MCF 10A (cell line): ENCODE measurements at regions of chr2 and their contacts with region 1.

Region 1: GRCh38 chr2:118088051-118089024 is at the start of gene INSIG2:
- DNase-seq: peak; percentile 97
- H3K4me3 Mint-ChIP-seq: peak within 1 kb of the TSS; percentile 93
- H3K27ac Mint-ChIP-seq: peak within 1 kb of the TSS; percentile 90
- H3K4me1 Mint-ChIP-seq: peaks cover 5% of the 10 kb centered on the region
- H3K27me3 Mint-ChIP-seq: peaks cover 23% of the 10 kb centered on the region
- CTCF ChIP-seq: peak; percentile 17
- total RNA-seq, gene INSIG2: 15.0 and 28.4 TPM in 2 replicates

Region 2: GRCh38 chr2:117571590-117572349 is 516.6 kb before region 1 on chr2:
- CTCF ChIA-PET with region 1: no interaction called
- POLR2A ChIA-PET with region 1: no interaction called
- intact Hi-C with region 1: no loop called
- DNase-seq: no peak
- H3K4me3 Mint-ChIP-seq: no peak overlapping the region
- H3K27ac Mint-ChIP-seq: no peak overlapping the region
- H3K4me1 Mint-ChIP-seq: no peaks in the 10 kb centered on the region
- H3K27me3 Mint-ChIP-seq: no peaks in the 10 kb centered on the region
- CTCF ChIP-seq: no peak

Region 3: DNA sequence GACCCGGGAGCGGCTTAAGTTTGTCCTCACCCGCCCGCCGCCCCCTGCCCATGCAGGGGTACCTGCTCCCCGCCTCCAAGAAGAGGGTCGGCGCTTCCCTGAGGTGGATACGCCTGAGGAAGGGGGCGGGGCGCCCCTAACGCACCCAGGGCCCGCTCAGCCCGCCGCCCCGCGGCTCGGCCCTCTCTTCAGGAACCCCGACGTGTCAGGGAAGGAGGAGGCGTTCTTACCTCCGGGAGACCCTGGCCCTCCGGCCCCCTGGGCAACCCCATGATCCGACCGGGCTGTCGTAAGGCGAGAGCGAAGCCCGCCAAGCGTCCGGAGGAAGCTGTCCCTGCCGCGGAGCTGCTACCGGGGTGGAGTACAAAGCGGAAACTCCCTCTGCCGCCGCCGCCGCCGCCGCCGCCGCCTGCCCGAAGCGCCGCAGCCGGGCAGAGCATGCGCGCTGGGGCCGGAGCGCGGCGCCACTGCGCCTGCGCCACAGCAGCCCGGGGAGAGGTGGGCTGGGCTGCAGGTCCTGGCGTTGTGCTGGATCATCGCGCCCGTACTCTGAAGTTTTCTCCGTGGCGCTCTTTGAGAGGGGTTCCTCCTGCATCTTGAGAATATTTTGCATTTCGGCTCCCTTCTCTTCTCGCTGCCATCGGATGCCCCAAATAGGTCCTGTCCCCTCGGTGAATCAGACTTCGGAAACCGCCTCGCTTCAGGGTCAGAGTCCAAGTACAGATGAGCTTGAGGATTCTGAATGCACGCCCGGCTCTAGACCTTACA is 74.4 kb before region 1 on chr2 and contains the start of gene CCDC93:
- CTCF ChIA-PET with region 1: no interaction called
- POLR2A ChIA-PET with region 1: interaction called, 18 read pairs
- intact Hi-C with region 1: no loop called
- DNase-seq: peak; percentile 80
- H3K4me3 Mint-ChIP-seq: peak within 1 kb of the TSS; percentile 83
- H3K27ac Mint-ChIP-seq: peak within 1 kb of the TSS; percentile 64
- H3K4me1 Mint-ChIP-seq: peaks cover 33% of the 10 kb centered on the region
- H3K27me3 Mint-ChIP-seq: no peaks in the 10 kb centered on the region
- CTCF ChIP-seq: no peak
- total RNA-seq, gene CCDC93: 37.8 and 44.9 TPM in 2 replicates

Region 4: GRCh38 chr2:118102433-118103082 is 14.2 kb after region 1 on chr2:
- CTCF ChIA-PET with region 1: interaction called, 5 read pairs
- POLR2A ChIA-PET with region 1: interaction called, 32 read pairs
- intact Hi-C with region 1: no loop called
- DNase-seq: peak; percentile 30
- H3K4me3 Mint-ChIP-seq: peak overlapping the region; percentile 19
- H3K27ac Mint-ChIP-seq: peak overlapping the region; percentile 61
- H3K4me1 Mint-ChIP-seq: peaks cover 27% of the 10 kb centered on the region
- H3K27me3 Mint-ChIP-seq: no peaks in the 10 kb centered on the region
- CTCF ChIP-seq: no peak

Region 5: GRCh38 chr2:118112771-118113334 is 24.5 kb after region 1 on chr2:
- CTCF ChIA-PET with region 1: interaction called, 5 read pairs
- POLR2A ChIA-PET with region 1: interaction called, 16 read pairs
- intact Hi-C with region 1: no loop called
- DNase-seq: peak; percentile 76
- H3K4me3 Mint-ChIP-seq: peak overlapping the region; percentile 1
- H3K27ac Mint-ChIP-seq: peak overlapping the region; percentile 87
- H3K4me1 Mint-ChIP-seq: peaks cover 20% of the 10 kb centered on the region
- H3K27me3 Mint-ChIP-seq: no peaks in the 10 kb centered on the region
- CTCF ChIP-seq: no peak

Region 6: DNA sequence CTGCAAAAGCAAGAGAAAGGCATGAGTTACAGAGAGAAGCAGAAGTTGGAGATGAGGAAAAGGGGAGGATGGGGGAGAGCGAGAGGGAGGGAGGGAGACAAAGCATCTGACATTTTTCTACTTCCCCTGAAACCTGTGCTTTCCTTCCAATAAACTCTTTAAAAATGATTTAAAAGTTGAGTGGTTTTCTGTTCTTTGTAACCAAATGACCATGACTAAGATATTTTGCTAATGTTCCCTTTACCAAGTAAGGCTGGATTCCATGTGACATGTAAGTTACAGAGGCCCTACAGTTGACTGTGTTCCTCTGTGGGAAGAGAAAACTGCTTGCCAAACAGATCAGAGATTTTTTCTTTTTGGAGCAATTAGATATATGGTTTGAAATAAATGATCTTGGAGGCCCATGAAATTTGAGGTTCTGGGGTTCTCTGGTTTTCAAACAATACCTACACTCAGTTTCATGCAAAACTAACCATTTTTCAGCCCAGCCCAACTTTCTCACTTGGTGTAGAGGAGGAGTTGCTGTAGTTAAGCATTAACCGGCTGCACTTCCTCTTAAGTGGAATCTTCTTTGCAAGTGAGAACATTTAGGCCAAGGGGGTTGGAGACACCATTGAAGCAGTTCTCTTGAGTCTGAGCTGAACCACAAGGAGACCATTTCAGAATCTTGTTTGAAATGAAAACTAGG is 34.4 kb after region 1 on chr2:
- CTCF ChIA-PET with region 1: interaction called, 4 read pairs
- POLR2A ChIA-PET with region 1: interaction called, 18 read pairs
- intact Hi-C with region 1: loop called (anchors 1 kb)
- DNase-seq: no peak
- H3K4me3 Mint-ChIP-seq: no peak overlapping the region
- H3K27ac Mint-ChIP-seq: peak overlapping the region; percentile 84
- H3K4me1 Mint-ChIP-seq: peaks cover 19% of the 10 kb centered on the region
- H3K27me3 Mint-ChIP-seq: no peaks in the 10 kb centered on the region
- CTCF ChIP-seq: no peak

Region 7: DNA sequence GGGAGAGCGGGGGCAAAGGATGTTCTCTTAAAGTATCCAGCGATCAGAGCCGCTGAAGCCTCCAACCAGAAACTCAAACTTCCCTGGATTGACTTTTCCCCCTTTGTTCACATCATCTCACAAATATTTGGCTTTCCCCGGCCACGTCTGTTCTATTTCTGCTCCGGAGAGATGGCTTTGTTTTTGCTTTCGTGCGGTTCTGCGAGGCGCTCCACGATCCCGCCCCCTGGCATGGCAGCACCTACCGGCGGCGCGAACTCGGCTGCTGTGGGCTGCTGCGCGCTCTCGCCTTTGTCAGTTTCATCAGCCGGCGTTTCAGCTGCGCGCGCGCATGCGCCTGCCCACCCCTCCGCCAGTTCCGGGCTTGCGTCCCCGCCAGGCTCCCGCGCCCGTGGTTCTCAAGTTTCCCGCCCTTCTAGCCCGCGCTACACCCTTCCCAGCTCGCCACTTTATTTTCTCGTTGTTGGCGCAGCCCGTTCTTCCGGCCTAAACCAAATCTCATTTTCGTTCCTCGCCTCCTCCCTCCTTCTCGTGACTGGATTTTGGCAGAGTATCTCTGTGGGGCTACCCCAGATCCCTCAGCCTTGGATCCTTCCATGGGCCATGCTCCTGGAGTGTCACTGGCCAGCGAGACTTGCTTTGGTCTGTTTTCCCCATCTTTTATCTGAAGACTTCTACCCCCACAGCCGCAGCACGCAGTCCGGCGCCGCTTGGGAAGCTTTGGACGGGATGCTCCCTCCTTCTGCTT is 97.9 kb after region 1 on chr2:
- CTCF ChIA-PET with region 1: interaction called, 3 read pairs
- POLR2A ChIA-PET with region 1: interaction called, 13 read pairs
- intact Hi-C with region 1: loop called (anchors 5 kb)
- DNase-seq: peak; percentile 74
- H3K4me3 Mint-ChIP-seq: peak overlapping the region; percentile 91
- H3K27ac Mint-ChIP-seq: peak overlapping the region; percentile 95
- H3K4me1 Mint-ChIP-seq: peaks cover 9% of the 10 kb centered on the region
- H3K27me3 Mint-ChIP-seq: peaks cover 5% of the 10 kb centered on the region
- CTCF ChIP-seq: no peak